Activated naive CD4-positive, alpha-beta T cell treated with anti-CD3 and anti-CD28 coated beads for 36 hours (primary cell): ENCODE measurements at regions of chr3 and their contacts with region 1.

Region 1: GRCh38 chr3:56443372-56443771 is 24.9 kb downstream of the ERC2 start:
- DNase-seq: no peak
- H3K4me3 Mint-ChIP-seq: no peak overlapping the region
- H3K27ac Mint-ChIP-seq: no peak overlapping the region
- H3K4me1 Mint-ChIP-seq: no peaks in the 10 kb centered on the region
- H3K27me3 Mint-ChIP-seq: peaks cover 14% of the 10 kb centered on the region

Region 2: GRCh38 chr3:56339671-56340070 is 103.7 kb before region 1 on chr3:
- CTCF ChIA-PET with region 1: interaction called, 7 read pairs
- intact Hi-C with region 1: loop called (anchors 1 kb)
- DNase-seq: no peak
- H3K4me3 Mint-ChIP-seq: no peak overlapping the region
- H3K27ac Mint-ChIP-seq: no peak overlapping the region
- H3K4me1 Mint-ChIP-seq: no peaks in the 10 kb centered on the region
- H3K27me3 Mint-ChIP-seq: peaks cover 11% of the 10 kb centered on the region

Region 3: GRCh38 chr3:56347219-56347871 is 96.0 kb before region 1 on chr3:
- CTCF ChIA-PET with region 1: interaction called, 3 read pairs
- intact Hi-C with region 1: loop called (anchors 1 kb)
- DNase-seq: peak; percentile 70
- H3K4me3 Mint-ChIP-seq: no peak overlapping the region
- H3K27ac Mint-ChIP-seq: no peak overlapping the region
- H3K4me1 Mint-ChIP-seq: no peaks in the 10 kb centered on the region
- H3K27me3 Mint-ChIP-seq: peaks cover 6% of the 10 kb centered on the region